Activated B cell treated with CpG ODN at 0.5 μM for 24 hours (primary cell): ENCODE measurements at regions of chr11 and their contacts with region 1.

Region 1: GRCh38 chr11:122655527-122656072 is at the start of gene UBASH3B:
- DNase-seq: peak; percentile 62
- ATAC-seq: peak; percentile 78
- H3K4me3 Mint-ChIP-seq: peak within 1 kb of the TSS; percentile 96
- H3K27ac Mint-ChIP-seq: peak within 1 kb of the TSS; percentile 79
- H3K4me1 Mint-ChIP-seq: peaks cover 21% of the 10 kb centered on the region
- H3K27me3 Mint-ChIP-seq: peaks cover 22% of the 10 kb centered on the region
- CTCF ChIP-seq: no peak
- total RNA-seq, gene UBASH3B: 2.9 and 4.3 TPM in 2 replicates

Region 2: GRCh38 chr11:122424636-122425035 is 231.0 kb before region 1 on chr11:
- CTCF ChIA-PET with region 1: no interaction called
- POLR2A ChIA-PET with region 1: no interaction called
- intact Hi-C with region 1: no loop called
- DNase-seq: no peak
- ATAC-seq: no peak
- H3K4me3 Mint-ChIP-seq: no peak overlapping the region
- H3K27ac Mint-ChIP-seq: no peak overlapping the region
- H3K4me1 Mint-ChIP-seq: no peaks in the 10 kb centered on the region
- H3K27me3 Mint-ChIP-seq: peaks cover 4% of the 10 kb centered on the region
- CTCF ChIP-seq: no peak

Region 3: GRCh38 chr11:122628810-122629555 is 26.6 kb before region 1 on chr11:
- CTCF ChIA-PET with region 1: interaction called, 8 read pairs
- POLR2A ChIA-PET with region 1: no interaction called
- intact Hi-C with region 1: loop called (anchors 1 kb)
- DNase-seq: peak; percentile 47
- ATAC-seq: peak; percentile 88
- H3K4me3 Mint-ChIP-seq: no peak overlapping the region
- H3K27ac Mint-ChIP-seq: no peak overlapping the region
- H3K4me1 Mint-ChIP-seq: peaks cover 2% of the 10 kb centered on the region
- H3K27me3 Mint-ChIP-seq: peaks cover 15% of the 10 kb centered on the region
- CTCF ChIP-seq: no peak

Region 4: DNA sequence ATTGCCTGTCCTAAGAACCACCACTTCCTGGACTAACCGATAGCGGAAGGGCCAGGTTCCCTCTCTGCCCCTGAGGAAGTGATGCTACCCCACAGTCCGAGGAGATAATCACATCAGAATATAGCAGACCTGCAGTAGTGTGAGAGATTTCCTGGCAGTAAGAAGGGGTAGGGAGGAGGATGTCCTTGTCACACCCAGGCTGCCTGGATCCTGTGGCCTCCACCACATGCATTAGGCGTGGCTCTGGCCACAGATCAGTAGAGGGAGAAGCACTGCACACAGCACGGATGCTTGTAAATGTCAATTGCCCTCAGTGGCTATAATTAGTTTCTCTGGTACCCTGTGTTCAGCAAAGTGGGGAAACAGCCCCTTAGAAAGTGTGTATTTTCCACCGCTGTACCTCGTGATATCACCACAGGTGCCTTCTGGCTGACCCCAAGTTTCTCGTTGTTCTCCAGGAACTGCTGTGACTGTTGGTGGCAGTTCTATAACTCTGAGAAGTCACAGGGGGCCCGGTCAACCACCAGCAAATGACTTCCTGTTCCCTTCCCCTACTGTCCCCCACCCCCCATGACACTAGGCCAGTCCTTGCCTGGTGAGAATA is 61.8 kb after region 1 on chr11:
- CTCF ChIA-PET with region 1: no interaction called
- POLR2A ChIA-PET with region 1: interaction called, 5 read pairs
- intact Hi-C with region 1: loop called (anchors 1 kb)
- DNase-seq: peak; percentile 38
- ATAC-seq: peak; percentile 69
- H3K4me3 Mint-ChIP-seq: peak overlapping the region; percentile 47
- H3K27ac Mint-ChIP-seq: peak overlapping the region; percentile 80
- H3K4me1 Mint-ChIP-seq: peaks cover 83% of the 10 kb centered on the region
- H3K27me3 Mint-ChIP-seq: peaks cover 2% of the 10 kb centered on the region
- CTCF ChIP-seq: no peak

Region 5: DNA sequence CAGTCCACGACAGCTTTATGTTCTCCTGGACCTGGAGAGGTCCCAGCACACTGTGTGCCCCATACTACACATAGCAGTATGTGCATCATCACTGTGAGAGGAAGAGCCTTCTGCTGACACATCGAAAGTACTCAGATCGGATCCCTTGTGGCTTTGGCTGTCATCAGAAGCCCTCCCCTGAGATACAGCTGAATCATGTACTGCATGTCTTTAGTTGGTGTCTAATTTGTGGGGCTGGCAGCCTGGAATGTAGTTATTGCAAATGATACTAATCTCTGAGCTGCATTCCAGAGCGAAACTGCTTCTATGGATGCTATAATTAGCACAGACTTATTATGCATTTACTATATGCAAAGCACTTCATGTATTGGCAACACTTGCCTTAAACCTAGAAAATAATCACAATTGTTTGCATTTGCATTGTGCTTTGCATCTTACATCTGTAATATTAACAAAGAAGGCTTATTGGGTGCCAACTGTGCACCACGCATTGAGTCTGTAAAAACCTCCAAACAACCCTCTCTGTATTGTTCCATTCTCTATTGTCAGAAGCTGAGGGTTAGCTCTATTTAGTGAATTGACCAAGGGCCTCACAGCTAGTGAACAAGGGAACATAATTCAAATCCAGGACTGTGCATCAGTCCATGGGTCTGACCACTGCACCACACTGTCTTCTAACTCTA is 93.5 kb after region 1 on chr11:
- CTCF ChIA-PET with region 1: interaction called, 79 read pairs
- POLR2A ChIA-PET with region 1: interaction called, 11 read pairs
- intact Hi-C with region 1: loop called (anchors 1 kb)
- DNase-seq: peak; percentile 26
- ATAC-seq: peak; percentile 75
- H3K4me3 Mint-ChIP-seq: no peak overlapping the region
- H3K27ac Mint-ChIP-seq: no peak overlapping the region
- H3K4me1 Mint-ChIP-seq: peaks cover 12% of the 10 kb centered on the region
- H3K27me3 Mint-ChIP-seq: no peaks in the 10 kb centered on the region
- CTCF ChIP-seq: no peak

Region 6: GRCh38 chr11:123054301-123055065 is 398.9 kb after region 1 on chr11:
- CTCF ChIA-PET with region 1: no interaction called
- POLR2A ChIA-PET with region 1: interaction called, 11 read pairs
- intact Hi-C with region 1: no loop called
- DNase-seq: no peak
- ATAC-seq: peak; percentile 87
- H3K4me3 Mint-ChIP-seq: no peak overlapping the region
- H3K27ac Mint-ChIP-seq: peak overlapping the region; percentile 61
- H3K4me1 Mint-ChIP-seq: peaks cover 54% of the 10 kb centered on the region
- H3K27me3 Mint-ChIP-seq: no peaks in the 10 kb centered on the region
- CTCF ChIP-seq: peak; percentile 35

Region 7: DNA sequence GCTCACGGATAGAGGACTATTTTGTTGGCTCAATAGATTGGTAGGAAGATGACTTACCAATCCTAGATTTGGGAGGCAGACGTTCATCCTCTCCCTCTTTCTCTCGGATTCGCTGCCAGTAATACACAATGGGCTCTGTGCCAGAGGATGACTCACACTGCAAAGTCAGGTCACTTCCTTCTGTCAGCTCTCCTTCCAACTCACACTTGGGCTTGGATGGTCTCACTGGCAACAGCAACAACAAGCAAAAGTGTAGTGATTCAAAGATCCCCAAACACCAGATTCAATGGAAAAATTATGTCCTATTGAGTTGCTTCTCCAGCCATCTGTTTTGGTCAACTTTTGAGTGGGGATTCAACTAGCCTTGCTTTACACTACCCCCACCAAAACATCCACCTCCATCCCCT is 428.0 kb after region 1 on chr11:
- CTCF ChIA-PET with region 1: no interaction called
- POLR2A ChIA-PET with region 1: no interaction called
- intact Hi-C with region 1: no loop called
- DNase-seq: no peak
- ATAC-seq: no peak
- H3K4me3 Mint-ChIP-seq: no peak overlapping the region
- H3K27ac Mint-ChIP-seq: no peak overlapping the region
- H3K4me1 Mint-ChIP-seq: no peaks in the 10 kb centered on the region
- H3K27me3 Mint-ChIP-seq: no peaks in the 10 kb centered on the region
- CTCF ChIP-seq: no peak